Heart right ventricle (tissue), 16 donors: ENCODE measurements at regions of chr15 and their contacts with region 1.

Region 1: DNA sequence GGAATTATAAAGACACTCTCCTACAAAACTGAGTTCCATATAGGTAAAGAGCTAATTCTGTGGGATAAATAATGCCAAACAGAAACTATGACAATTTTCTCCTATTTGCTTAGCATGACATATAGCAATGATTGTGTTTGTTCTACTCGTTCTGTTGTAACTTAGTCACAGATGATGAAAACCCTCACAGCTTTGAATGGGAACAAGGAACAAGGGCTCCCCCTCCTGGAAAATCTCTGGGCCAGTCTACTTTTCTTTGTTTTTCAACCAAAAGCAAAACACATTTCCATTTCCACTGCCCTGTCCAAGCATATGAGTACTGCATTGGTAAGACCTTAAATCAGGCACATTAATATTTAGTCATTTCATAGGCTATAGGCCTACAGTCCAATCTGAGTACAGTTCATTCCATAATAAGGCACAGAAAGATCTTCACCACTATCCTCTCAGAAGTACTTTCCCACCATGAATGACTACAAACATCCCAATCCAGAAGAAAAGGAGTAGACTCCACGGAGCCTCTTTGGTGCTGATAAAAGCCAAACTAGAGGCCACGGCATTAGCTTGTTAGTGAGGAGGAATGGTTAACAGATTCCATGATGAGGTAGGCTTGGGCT is 67.1 kb downstream of the ATP8B4 start:
- DNase-seq: peak in 1 of 2 donors; percentile 64
- ATAC-seq: peak in 5 of 8 donors; percentile 17 to 58 (median 30)
- H3K4me3 ChIP-seq: no peak overlapping the region
- H3K27ac ChIP-seq: peak overlapping the region in 1 of 10 donors; percentile 86
- H3K4me1 ChIP-seq: peaks cover 0 to 51% (median 0%) of the 10 kb centered on the region in 9 donors
- H3K27me3 ChIP-seq: no peaks in the 10 kb centered on the region
- CTCF ChIP-seq: peak; percentile 15 to 72 (median 64)

Region 2: GRCh38 chr15:49235446-49236124 is 816.3 kb before region 1 on chr15:
- intact Hi-C with region 1: loop called in 5 of 10 experiments (anchors 5 to 10 kb)
- DNase-seq: peak in 1 of 2 donors; percentile 46
- ATAC-seq: peak; percentile 64 to 85 (median 80)
- H3K4me3 ChIP-seq: no peak overlapping the region
- H3K27ac ChIP-seq: peak overlapping the region in 3 of 10 donors; percentile 3 to 52 (median 23)
- H3K4me1 ChIP-seq: peaks cover 0 to 52% (median 21%) of the 10 kb centered on the region in 9 donors
- H3K27me3 ChIP-seq: no peaks in the 10 kb centered on the region
- CTCF ChIP-seq: peak; percentile 46 to 82 (median 78)

Region 3: DNA sequence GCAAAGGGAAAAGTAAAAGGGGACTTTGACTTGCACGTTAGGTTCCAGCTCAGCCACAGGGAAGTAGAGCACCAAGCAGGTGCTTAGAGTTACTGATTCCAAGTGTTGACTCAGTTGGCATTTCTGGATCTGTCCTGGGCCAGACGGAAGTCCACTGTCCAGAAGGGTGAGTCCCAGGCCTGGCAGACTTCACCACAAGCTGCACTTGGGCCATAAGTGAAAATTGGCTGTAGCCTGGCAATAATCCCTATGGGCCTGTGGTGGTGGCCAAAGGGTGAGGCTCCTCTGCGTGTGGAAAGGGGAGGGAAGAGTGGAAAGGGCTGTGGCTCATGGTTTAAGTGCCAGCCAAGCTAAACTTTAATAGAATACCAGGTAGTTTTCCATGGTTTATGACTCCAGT is 309.5 kb before region 1 on chr15:
- intact Hi-C with region 1: no loop called
- DNase-seq: peak in 1 of 2 donors; percentile 13
- ATAC-seq: peak in 3 of 8 donors; percentile 22 to 94 (median 62)
- H3K4me3 ChIP-seq: no peak overlapping the region
- H3K27ac ChIP-seq: peak overlapping the region in 1 of 10 donors; percentile 14
- H3K4me1 ChIP-seq: no peaks in the 10 kb centered on the region
- H3K27me3 ChIP-seq: no peaks in the 10 kb centered on the region
- CTCF ChIP-seq: no peak

Region 4: DNA sequence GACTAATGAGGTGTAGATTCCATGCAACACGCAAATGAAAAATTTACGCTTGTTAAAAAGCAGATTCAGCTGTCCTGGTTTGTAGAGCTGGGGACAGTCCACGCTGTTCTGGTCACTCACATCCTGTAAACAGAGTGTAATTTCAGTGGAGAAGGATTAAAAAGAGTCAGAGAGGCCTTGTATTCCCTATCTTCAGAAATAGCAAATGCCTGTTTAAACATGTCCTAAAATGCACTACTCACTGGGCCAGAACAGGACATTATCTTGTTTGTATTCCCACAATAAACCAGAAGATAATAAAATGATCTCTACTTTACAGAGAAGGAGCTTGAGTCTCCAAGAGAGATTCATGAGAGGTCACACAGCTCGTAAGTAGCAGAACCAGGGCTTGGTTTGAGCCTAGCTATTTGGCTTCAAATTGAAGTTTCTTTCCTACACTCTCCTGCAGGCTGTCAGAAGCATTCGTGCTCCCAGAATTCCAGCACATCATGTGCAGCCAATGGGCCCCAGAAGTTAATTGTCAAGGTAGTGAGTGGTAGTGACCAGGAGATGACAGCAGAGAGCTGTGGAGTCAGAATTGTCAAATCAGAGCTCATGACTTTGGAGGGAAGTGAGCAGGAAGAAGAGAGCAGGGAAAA is 175.4 kb before region 1 on chr15:
- intact Hi-C with region 1: loop called in 1 of 10 experiments (anchors 5 kb)
- DNase-seq: peak in 1 of 2 donors; percentile 29
- ATAC-seq: peak; percentile 44 to 88 (median 80)
- H3K4me3 ChIP-seq: peak overlapping the region in 1 of 10 donors; percentile 2
- H3K27ac ChIP-seq: peak overlapping the region; percentile 54 to 81 (median 73)
- H3K4me1 ChIP-seq: peaks cover 0 to 29% (median 12%) of the 10 kb centered on the region in 9 donors
- H3K27me3 ChIP-seq: no peaks in the 10 kb centered on the region
- CTCF ChIP-seq: peak in 8 of 9 donors; percentile 38 to 53 (median 44)

Region 5: GRCh38 chr15:49901996-49902684 is 149.8 kb before region 1 on chr15:
- intact Hi-C with region 1: loop called in 2 of 10 experiments (anchors 5 kb)
- DNase-seq: no peak
- ATAC-seq: peak in 4 of 8 donors; percentile 7 to 24 (median 16)
- H3K4me3 ChIP-seq: peak overlapping the region in 2 of 10 donors; percentile 3 to 23
- H3K27ac ChIP-seq: peak overlapping the region; percentile 8 to 87 (median 78)
- H3K4me1 ChIP-seq: peaks cover 0 to 46% (median 18%) of the 10 kb centered on the region in 9 donors
- H3K27me3 ChIP-seq: no peaks in the 10 kb centered on the region
- CTCF ChIP-seq: peak in 5 of 9 donors; percentile 31 to 47 (median 33)